CD4-positive, alpha-beta T cell (primary cell): ENCODE measurements at regions of chr2 and their contacts with region 1.

Region 1: DNA sequence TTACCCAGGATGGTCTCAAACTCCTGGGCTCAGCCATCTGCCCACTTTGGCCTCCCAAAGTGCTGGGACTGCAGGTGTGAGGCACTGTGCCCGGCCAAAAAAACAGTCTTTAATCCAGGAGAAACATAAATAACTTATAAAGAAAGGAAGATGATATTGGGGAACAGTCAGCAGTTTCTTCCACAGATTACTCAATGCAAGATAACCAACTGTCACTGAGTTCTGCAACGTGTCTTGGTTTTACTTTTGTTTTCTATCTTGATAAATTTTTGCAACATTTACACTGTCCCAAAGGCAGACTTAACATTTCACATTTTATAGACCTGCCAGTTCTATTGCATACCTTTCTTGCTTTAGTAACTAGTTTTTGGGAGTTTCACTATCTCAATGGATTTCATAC is 71.1 kb downstream of the ANKRD44 start:
- DNase-seq: peak in 3 of 14 experiments; percentile 49 to 65 (median 51)
- ATAC-seq: peak; percentile 32
- H3K4me3 ChIP-seq: peak overlapping the region; percentile 32
- H3K4me3 Mint-ChIP-seq: peak overlapping the region; percentile 88
- H3K27ac ChIP-seq: peak overlapping the region; percentile 74 to 75
- H3K27ac Mint-ChIP-seq: peak overlapping the region; percentile 91
- H3K4me1 ChIP-seq: peaks cover 77% of the 10 kb centered on the region
- H3K4me1 Mint-ChIP-seq: peaks cover 95% of the 10 kb centered on the region
- H3K27me3 ChIP-seq: no peaks in the 10 kb centered on the region
- H3K27me3 Mint-ChIP-seq: no peaks in the 10 kb centered on the region
- CTCF ChIP-seq: no peak

Region 2: DNA sequence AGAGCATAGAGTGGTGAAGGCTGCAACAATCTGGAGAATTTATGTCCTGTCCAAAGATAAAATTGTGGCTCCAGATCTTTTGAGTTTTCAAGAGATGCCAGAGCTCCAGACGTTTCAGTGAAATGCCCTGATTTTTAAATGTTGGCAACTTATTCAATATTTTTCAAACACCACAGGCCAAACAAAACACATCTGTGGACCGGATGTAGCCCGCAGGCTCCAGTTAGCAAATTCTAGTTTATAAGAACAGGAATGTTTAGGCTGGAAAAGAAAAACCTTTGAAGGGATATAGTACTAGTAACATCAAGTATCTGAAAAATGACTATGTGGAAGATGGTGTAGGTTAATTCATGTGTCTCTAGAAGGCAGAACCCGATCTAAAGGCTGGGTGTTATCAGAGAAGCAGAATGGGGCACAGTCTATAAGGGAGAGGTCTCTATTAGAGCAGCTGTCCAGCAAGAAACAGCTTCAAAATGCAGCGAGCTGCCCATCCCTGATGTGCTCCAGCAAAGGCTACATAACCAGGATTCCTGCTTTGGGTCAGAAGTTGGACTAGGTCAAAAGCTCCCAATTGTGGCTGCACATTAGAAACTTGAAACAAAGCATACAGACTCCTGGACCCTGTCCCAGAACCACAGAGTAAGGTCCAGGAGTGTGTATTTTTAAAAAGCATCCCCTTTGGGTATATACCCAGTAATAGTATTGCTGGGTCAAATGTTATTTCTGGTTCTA is 34.7 kb before region 1 on chr2:
- CTCF ChIA-PET with region 1: interaction called, 5 read pairs
- POLR2A ChIA-PET with region 1: interaction called, 38 read pairs
- intact Hi-C with region 1: loop called (anchors 1 to 5 kb)
- DNase-seq: no peak
- ATAC-seq: no peak
- H3K4me3 ChIP-seq: no peak overlapping the region
- H3K4me3 Mint-ChIP-seq: peak overlapping the region; percentile 61
- H3K27ac ChIP-seq: peak overlapping the region; percentile 76 to 84
- H3K27ac Mint-ChIP-seq: peak overlapping the region; percentile 98
- H3K4me1 ChIP-seq: peaks cover 84% of the 10 kb centered on the region
- H3K4me1 Mint-ChIP-seq: peaks cover 92% of the 10 kb centered on the region
- H3K27me3 ChIP-seq: no peaks in the 10 kb centered on the region
- H3K27me3 Mint-ChIP-seq: no peaks in the 10 kb centered on the region
- CTCF ChIP-seq: no peak

Region 3: GRCh38 chr2:197216361-197216979 is 23.0 kb before region 1 on chr2:
- CTCF ChIA-PET with region 1: interaction called, 7 read pairs
- POLR2A ChIA-PET with region 1: interaction called, 18 read pairs
- intact Hi-C with region 1: loop called in 1 of 2 experiments (anchors 2 kb)
- DNase-seq: peak in 1 of 14 experiments; percentile 38
- ATAC-seq: peak; percentile 14
- H3K4me3 ChIP-seq: no peak overlapping the region
- H3K4me3 Mint-ChIP-seq: peak overlapping the region; percentile 63
- H3K27ac ChIP-seq: peak overlapping the region; percentile 33 to 62
- H3K27ac Mint-ChIP-seq: peak overlapping the region; percentile 98
- H3K4me1 ChIP-seq: peaks cover 57% of the 10 kb centered on the region
- H3K4me1 Mint-ChIP-seq: peaks cover 89% of the 10 kb centered on the region
- H3K27me3 ChIP-seq: no peaks in the 10 kb centered on the region
- H3K27me3 Mint-ChIP-seq: no peaks in the 10 kb centered on the region
- CTCF ChIP-seq: no peak

Region 4: DNA sequence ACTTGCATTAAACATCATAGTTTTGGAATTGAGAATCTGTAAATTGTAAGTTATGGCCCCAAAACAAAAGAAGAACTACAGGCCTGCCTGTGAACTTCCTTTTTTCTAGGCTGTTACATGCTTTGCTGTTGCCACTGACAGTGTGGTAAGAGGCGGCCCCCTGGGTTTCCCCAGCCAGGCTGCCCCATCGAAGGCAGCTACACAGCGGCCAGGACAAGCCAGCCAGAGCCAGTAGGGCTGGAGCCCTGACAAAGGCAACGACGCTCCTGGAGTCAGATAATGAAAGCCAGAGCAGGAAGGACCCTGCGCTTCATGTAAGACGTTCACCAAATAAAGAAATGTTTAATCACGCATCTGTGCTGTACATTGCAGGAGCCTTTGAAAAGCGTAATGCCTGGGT is 16.1 kb after region 1 on chr2:
- CTCF ChIA-PET with region 1: interaction called, 6 read pairs
- POLR2A ChIA-PET with region 1: interaction called, 29 read pairs
- intact Hi-C with region 1: loop called in 1 of 2 experiments (anchors 2 kb)
- DNase-seq: peak; percentile 36 to 93 (median 56)
- ATAC-seq: peak; percentile 82
- H3K4me3 ChIP-seq: peak overlapping the region; percentile 13
- H3K4me3 Mint-ChIP-seq: peak overlapping the region; percentile 75
- H3K27ac ChIP-seq: peak overlapping the region; percentile 76 to 85
- H3K27ac Mint-ChIP-seq: peak overlapping the region; percentile 94
- H3K4me1 ChIP-seq: peaks cover 50% of the 10 kb centered on the region
- H3K4me1 Mint-ChIP-seq: peaks cover 89% of the 10 kb centered on the region
- H3K27me3 ChIP-seq: no peaks in the 10 kb centered on the region
- H3K27me3 Mint-ChIP-seq: no peaks in the 10 kb centered on the region
- CTCF ChIP-seq: no peak

Region 5: GRCh38 chr2:197286805-197287598 is 47.6 kb after region 1 on chr2:
- CTCF ChIA-PET with region 1: interaction called, 3 read pairs
- POLR2A ChIA-PET with region 1: interaction called, 10 read pairs
- intact Hi-C with region 1: no loop called
- DNase-seq: peak in 7 of 14 experiments; percentile 25 to 88 (median 61)
- ATAC-seq: peak; percentile 96
- H3K4me3 ChIP-seq: no peak overlapping the region
- H3K4me3 Mint-ChIP-seq: peak overlapping the region; percentile 84
- H3K27ac ChIP-seq: peak overlapping the region; percentile 43 to 60
- H3K27ac Mint-ChIP-seq: peak overlapping the region; percentile 86
- H3K4me1 ChIP-seq: peaks cover 70% of the 10 kb centered on the region
- H3K4me1 Mint-ChIP-seq: peaks cover 85% of the 10 kb centered on the region
- H3K27me3 ChIP-seq: no peaks in the 10 kb centered on the region
- H3K27me3 Mint-ChIP-seq: no peaks in the 10 kb centered on the region
- CTCF ChIP-seq: no peak

Region 6: DNA sequence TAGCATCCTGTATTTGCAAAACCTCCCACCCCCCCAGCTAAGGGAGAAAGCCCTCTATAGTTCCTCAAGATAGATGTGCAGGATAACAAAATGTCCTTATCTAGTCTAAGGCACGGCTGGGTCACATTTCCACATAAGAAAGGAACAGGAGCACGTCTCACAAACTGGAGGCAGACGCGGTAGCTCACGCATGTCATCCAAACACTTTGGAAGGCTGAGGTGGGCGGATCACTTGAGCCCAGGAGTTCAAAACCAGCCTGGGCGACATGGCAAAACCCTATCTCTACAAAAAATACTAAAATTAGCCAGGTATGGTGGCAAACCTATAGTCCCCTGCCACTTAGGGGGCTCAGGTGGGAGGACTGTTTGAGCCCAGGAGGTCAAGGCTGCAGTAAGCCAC is 186.1 kb after region 1 on chr2:
- CTCF ChIA-PET with region 1: no interaction called
- POLR2A ChIA-PET with region 1: no interaction called
- intact Hi-C with region 1: no loop called
- DNase-seq: no peak
- ATAC-seq: no peak
- H3K4me3 ChIP-seq: no peak overlapping the region
- H3K4me3 Mint-ChIP-seq: peak overlapping the region; percentile 39
- H3K27ac ChIP-seq: no peak overlapping the region
- H3K27ac Mint-ChIP-seq: peak overlapping the region; percentile 45
- H3K4me1 ChIP-seq: peaks cover 57% of the 10 kb centered on the region
- H3K4me1 Mint-ChIP-seq: peaks cover 73% of the 10 kb centered on the region
- H3K27me3 ChIP-seq: no peaks in the 10 kb centered on the region
- H3K27me3 Mint-ChIP-seq: no peaks in the 10 kb centered on the region
- CTCF ChIP-seq: no peak